PC-9 (cell line): ENCODE measurements at regions of chr13 and their contacts with region 1.

Region 1: DNA sequence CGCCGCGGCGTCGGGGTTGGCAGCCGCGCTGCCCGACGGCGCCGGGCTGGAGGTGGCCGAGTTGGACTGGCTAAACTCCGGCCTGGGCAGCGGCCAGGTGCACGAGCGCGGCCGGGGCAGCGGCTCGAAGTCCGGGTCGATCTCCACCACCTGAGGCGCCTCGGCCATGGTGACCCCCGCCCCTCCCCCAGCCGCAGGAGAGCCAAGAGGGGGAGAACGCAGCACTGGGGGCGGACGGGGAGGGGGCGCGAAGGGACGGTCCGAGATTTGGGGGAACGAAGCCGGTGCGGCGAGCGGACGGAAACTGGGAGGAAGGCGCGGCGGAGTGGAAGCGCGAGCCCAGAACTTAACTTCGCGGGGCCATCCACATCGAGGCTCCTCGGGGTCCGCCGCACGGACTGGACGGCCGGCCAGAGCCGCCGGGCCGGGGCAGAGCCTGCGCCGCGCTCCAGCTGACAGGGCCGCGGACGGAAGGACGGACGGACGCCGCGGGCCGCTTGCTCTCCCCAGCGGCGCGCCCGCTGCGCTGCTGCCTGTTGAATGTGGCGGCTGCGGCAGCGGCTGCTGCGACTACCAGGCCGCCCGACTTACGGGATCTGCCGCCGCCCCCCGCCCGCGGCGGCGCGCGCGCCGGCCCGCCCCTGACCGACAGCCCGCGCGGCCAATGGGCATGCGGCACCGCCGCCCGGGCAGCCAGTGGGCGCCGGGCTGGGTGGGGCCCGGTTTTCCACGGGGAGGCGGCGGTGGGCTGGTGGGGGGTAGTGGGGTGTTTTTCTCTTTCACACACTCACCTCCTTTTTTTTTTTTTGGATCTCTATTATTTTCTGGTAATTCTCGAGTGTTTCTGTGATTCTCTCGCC is at the start of gene FOXO1:
- DNase-seq: peak; percentile 58 to 89
- H3K4me3 ChIP-seq: peak within 1 kb of the TSS; percentile 90
- H3K27ac ChIP-seq: peak within 1 kb of the TSS; percentile 44; the same call in 1 of the 2 replicates
- H3K4me1 ChIP-seq: peaks cover 23% of the 10 kb centered on the region
- H3K27me3 ChIP-seq: no peaks in the 10 kb centered on the region
- CTCF ChIP-seq: no peak
- total RNA-seq, gene FOXO1: 9.0 and 10.5 TPM in 2 replicates

Region 2: GRCh38 chr13:39942552-39943273 is 723.6 kb before region 1 on chr13:
- CTCF ChIA-PET with region 1: no interaction called
- POLR2A ChIA-PET with region 1: no interaction called
- intact Hi-C with region 1: loop called (anchors 5 kb)
- DNase-seq: peak; percentile 53 to 59
- H3K4me3 ChIP-seq: no peak overlapping the region
- H3K27ac ChIP-seq: no peak overlapping the region
- H3K4me1 ChIP-seq: no peaks in the 10 kb centered on the region
- H3K27me3 ChIP-seq: no peaks in the 10 kb centered on the region
- CTCF ChIP-seq: peak; percentile 84

Region 3: GRCh38 chr13:40401911-40402776 is 264.1 kb before region 1 on chr13:
- CTCF ChIA-PET with region 1: no interaction called
- POLR2A ChIA-PET with region 1: interaction called, 3 read pairs
- intact Hi-C with region 1: loop called (anchors 2 kb)
- DNase-seq: peak; percentile 88 to 91
- H3K4me3 ChIP-seq: peak overlapping the region; percentile 21; the same call in 1 of the 2 replicates
- H3K27ac ChIP-seq: peak overlapping the region; percentile 71
- H3K4me1 ChIP-seq: peaks cover 62% of the 10 kb centered on the region
- H3K27me3 ChIP-seq: no peaks in the 10 kb centered on the region
- CTCF ChIP-seq: no peak

Region 4: DNA sequence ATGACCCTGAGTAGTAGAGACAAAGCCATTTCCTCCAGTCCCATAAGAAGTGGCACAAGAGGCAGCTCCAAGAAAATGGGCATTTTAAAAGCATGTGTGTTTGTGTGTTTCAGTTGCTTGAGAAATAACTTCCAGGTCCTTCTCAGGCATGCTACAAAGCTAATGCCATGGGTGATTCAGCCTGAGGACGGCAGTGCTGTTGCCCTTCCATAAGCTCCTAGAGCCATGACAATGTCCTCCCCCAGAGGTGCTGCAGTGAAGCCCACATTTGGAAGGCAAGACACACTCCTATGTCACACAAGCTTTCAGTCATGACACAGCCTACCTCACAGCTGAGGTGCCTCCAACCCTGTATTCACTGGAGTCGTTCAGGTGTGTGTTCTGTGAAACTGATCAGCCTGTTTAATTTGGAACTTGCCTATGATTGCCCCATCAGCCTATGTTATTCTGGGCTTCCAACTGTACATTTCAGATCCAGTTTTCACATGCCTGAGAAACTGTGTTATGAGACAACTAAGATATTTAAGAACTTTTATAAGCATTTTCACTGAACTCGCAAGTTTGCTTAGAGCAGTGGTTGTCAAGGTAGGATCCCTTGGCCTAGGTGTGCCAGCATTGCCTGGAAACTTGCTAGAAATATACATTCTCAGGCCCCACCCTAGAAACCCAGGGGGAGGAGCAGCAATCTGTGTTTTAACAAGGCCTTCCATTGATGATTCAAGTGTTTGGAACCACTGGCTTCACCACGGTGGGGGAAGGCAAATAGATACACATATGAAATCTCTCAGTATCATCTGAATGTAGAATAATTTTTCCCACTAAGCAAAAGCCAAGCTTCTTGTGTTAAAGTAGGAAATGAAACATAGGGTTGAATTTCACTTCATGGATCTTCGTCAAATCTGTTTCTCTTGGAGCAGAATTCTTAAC is 213.3 kb before region 1 on chr13:
- CTCF ChIA-PET with region 1: interaction called, 11 read pairs
- POLR2A ChIA-PET with region 1: interaction called, 6 read pairs
- intact Hi-C with region 1: no loop called
- DNase-seq: peak; percentile 65 to 83
- H3K4me3 ChIP-seq: no peak overlapping the region
- H3K27ac ChIP-seq: peak overlapping the region; percentile 92
- H3K4me1 ChIP-seq: peaks cover 30% of the 10 kb centered on the region
- H3K27me3 ChIP-seq: no peaks in the 10 kb centered on the region
- CTCF ChIP-seq: no peak

Region 5: DNA sequence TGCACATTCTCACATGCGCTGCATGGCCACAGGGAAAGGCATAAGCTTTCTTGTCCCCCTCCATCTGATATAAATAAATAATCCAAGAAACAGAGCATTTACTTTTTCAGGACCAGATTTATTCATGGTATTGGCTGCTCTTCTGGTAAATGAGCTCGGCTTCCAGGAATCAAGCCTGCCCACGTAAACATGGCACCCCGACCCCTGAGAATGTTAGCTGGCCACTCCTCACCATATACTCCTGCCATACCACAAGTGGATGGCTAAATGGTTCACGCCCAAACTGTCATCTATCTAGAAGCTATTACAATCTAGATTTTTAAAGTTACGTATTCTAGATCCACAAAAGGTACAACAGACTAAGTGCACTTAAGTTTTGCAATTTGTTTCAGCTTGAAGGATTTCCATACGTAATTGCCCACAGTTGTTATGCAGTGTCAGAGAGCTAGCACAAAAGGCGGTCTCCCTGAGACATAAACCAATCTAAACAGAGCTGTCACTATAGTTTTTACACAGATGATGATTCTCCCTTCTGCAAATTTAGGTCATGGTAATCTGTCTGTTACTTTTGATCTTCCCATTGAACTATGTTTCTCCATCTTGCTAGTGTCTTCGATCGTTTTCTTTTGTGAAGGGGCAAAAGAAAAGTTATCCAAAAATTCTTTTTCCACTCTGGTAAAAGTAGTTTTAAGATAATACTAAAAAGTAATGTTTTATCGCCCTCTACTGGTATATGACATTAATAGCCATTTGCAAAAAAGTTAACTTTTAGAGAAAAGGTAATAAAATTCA is 16.4 kb after region 1 on chr13:
- CTCF ChIA-PET with region 1: no interaction called
- POLR2A ChIA-PET with region 1: interaction called, 13 read pairs
- intact Hi-C with region 1: no loop called
- DNase-seq: no peak
- H3K4me3 ChIP-seq: no peak overlapping the region
- H3K27ac ChIP-seq: no peak overlapping the region
- H3K4me1 ChIP-seq: no peaks in the 10 kb centered on the region
- H3K27me3 ChIP-seq: no peaks in the 10 kb centered on the region
- CTCF ChIP-seq: peak; percentile 80

Region 6: DNA sequence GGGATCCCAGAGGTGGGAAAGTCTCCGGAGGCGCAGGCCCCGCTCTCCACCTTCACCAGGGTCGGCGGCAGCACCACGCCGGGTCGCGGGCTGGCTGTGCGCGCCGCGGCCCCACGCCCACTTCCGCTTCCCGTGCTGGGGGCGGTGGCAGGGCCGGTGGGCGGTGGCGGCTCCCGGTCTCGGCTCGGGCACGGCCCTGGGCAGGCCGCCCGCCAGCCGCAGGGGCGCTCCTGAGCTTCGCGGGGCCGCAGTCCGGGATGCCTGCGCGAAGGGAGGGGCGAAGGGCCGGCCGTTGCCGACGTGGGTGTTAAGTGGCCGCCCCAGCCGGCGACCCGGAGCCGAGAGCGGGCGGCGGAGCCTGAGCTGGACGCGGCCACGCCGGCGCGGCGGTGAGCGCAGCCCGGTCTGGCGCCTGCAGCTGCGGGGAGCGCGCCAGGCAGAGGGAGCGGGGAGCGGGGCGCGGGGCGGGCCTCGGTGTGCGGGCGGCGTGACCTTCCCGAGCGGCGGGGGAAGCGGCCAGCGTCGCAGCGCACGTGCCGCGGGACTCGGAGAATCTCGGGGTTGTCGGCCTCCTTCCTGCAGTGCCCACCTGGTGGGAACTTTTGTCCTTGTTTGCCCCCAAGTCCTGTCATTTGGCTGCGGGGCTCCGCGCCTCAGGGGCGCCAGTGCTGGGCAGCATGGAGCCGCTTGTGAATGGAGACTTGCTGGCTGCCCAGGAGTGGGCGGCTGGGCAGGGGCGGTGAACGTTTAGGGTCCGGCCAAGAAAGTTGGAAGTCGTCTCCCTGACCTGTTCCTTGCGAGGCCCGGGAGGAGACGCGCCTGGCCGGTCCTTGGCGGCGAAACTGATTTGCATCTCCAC is 123.2 kb after region 1 on chr13 and contains the start of gene SLC25A15:
- CTCF ChIA-PET with region 1: no interaction called
- POLR2A ChIA-PET with region 1: no interaction called
- intact Hi-C with region 1: no loop called
- DNase-seq: peak; percentile 66 to 88
- H3K4me3 ChIP-seq: peak within 1 kb of the TSS; percentile 94
- H3K27ac ChIP-seq: peak within 1 kb of the TSS; percentile 72
- H3K4me1 ChIP-seq: peaks cover 6% of the 10 kb centered on the region; the same call in 1 of the 2 replicates
- H3K27me3 ChIP-seq: no peaks in the 10 kb centered on the region
- CTCF ChIP-seq: no peak
- total RNA-seq, gene SLC25A15: 7.2 and 10.9 TPM in 2 replicates